AG04450 (cell line): ENCODE measurements at regions of chr11 and their contacts with region 1.

Region 1: GRCh38 chr11:74434528-74434927 is 32.8 kb downstream of the KCNE3 start:
- DNase-seq: no peak
- H3K4me3 ChIP-seq: no peak overlapping the region
- H3K27ac ChIP-seq: no peak overlapping the region
- H3K27me3 ChIP-seq: no peaks in the 10 kb centered on the region
- CTCF ChIP-seq: no peak

Region 2: DNA sequence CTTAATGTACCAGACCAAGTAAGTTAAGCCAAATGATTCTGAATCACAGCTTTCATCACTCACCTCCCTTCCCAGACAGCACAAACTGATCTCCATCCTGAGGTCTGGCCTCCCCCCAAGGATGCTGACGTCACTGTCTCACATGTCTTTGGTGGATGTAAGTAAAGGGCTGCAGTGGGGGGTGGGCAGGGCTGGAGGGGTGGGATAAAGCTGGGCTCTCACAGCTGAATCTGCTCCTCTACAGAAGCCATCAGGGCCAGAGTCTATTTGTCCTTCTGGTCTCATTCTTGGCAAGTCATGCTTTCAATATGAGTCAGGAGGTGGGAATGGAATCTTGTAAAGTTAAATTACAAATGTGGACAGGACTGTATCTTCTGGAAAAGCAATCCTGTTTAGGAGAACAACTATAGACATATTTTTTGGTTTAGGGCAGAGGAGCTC is 155.8 kb before region 1 on chr11:
- CTCF ChIA-PET with region 1: no interaction called
- POLR2A ChIA-PET with region 1: interaction called, 10 read pairs
- DNase-seq: peak; percentile 98
- H3K4me3 ChIP-seq: no peak overlapping the region
- H3K27ac ChIP-seq: peak overlapping the region; percentile 98
- H3K27me3 ChIP-seq: no peaks in the 10 kb centered on the region
- CTCF ChIP-seq: no peak

Region 3: GRCh38 chr11:74506823-74507222 is 72.3 kb after region 1 on chr11:
- CTCF ChIA-PET with region 1: no interaction called
- POLR2A ChIA-PET with region 1: no interaction called
- DNase-seq: no peak
- H3K4me3 ChIP-seq: no peak overlapping the region
- H3K27ac ChIP-seq: no peak overlapping the region
- H3K27me3 ChIP-seq: peaks cover 14% of the 10 kb centered on the region
- CTCF ChIP-seq: no peak